Left cardiac atrium (tissue), 4 donors: ENCODE measurements at regions of chr5 and their contacts with region 1.

Region 1: DNA sequence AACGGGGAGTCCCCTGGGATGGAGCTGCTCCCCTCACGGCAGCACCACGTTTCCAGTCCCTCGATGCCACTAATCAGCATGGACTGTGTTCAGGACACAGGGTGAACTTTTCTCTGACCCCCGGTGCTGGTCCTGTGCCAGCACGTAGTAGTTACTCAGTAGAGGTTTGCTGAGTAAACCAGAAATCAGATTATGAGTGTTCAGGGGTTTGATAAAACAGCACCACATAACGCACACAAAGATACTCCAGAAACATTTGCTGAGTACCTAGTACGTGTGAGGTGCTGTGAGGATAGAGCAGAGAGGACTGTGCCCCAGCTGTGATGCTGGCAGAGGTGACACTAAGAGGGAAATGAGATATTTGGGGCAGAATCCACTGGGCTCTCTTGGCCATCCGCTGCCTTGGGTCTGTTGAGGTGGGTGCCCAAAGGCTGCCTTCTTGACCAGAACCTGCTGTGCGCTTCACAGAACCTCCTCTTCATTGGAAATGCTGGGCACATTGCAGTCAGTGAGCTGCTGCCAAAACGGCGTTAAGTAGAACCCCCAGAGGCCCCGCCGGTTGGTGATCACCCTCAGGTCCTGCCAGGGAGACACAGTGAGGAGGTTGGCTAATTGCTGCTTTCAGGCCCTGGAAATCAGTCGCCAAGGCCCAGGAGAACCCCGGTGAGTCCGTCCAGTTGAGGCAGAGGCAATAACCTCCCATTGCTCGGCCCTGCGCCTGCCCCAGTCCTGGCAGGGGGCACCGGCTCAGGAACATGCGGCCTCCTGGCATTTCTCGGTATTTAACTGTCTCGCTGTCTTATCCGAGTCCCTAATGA is 49.4 kb downstream of the NEURL1B start:
- DNase-seq: no peak
- ATAC-seq: peak in 1 of 2 donors; percentile 18

Region 2: GRCh38 chr5:172541099-172541771 is 149.2 kb before region 1 on chr5:
- intact Hi-C with region 1: no loop called
- DNase-seq: no peak
- ATAC-seq: no peak

Region 3: GRCh38 chr5:172659909-172660628 is 30.4 kb before region 1 on chr5:
- intact Hi-C with region 1: loop called in 1 of 2 experiments (anchors 5 kb)
- DNase-seq: peak; percentile 93
- ATAC-seq: peak; percentile 90 to 94